RWPE1 (cell line): ENCODE measurements at regions of chr20 and their contacts with region 1.

Region 1: DNA sequence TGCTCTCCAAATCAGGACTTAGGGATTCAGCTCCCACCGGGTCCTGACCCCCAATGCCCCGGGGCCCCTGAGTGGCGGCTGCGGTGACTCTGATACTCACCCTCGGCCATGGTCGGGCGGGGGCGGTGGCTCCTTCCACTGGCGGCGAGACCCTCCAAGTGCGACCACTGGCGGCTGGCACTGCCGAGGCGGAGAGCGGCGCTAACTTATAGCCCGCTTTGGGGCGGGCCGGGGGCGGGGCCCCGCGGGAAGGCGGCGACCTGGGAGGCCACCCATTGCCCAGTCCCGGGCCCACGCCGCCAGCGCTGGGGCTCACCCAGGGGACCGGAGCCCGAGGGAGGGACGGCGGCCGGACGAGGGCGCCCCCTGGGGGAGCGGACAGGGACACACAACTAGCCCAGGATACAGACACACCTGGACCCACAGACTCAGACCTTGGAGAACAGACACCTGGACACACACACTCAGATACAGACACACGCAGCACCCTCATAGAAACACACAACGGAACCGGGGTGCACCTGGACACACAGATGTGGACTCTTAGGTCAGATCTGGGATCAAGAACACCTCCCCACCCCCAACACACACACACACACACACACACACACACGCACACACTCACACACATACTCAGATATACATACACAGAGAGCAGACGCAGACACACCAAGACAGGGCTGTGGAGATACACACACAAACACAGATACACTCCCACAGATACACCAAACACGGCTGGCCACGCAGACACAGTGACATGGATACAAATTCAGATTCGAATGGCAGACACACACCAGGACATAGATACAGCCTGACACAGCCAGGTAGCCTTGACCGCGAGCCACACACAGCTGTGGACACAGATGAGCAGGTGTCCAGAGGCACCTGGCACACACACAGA is at the start of gene TGM2:
- DNase-seq: peak; percentile 71
- H3K27ac ChIP-seq: peak within 1 kb of the TSS; percentile 86; the same call in 1 of the 2 replicates
- CTCF ChIP-seq: peak; percentile 89

Region 2: GRCh38 chr20:38057351-38057972 is 107.9 kb before region 1 on chr20:
- CTCF ChIA-PET with region 1: interaction called, 12 read pairs
- POLR2A ChIA-PET with region 1: no interaction called
- DNase-seq: peak; percentile 92
- H3K27ac ChIP-seq: no peak overlapping the region
- CTCF ChIP-seq: peak; percentile 97

Region 3: DNA sequence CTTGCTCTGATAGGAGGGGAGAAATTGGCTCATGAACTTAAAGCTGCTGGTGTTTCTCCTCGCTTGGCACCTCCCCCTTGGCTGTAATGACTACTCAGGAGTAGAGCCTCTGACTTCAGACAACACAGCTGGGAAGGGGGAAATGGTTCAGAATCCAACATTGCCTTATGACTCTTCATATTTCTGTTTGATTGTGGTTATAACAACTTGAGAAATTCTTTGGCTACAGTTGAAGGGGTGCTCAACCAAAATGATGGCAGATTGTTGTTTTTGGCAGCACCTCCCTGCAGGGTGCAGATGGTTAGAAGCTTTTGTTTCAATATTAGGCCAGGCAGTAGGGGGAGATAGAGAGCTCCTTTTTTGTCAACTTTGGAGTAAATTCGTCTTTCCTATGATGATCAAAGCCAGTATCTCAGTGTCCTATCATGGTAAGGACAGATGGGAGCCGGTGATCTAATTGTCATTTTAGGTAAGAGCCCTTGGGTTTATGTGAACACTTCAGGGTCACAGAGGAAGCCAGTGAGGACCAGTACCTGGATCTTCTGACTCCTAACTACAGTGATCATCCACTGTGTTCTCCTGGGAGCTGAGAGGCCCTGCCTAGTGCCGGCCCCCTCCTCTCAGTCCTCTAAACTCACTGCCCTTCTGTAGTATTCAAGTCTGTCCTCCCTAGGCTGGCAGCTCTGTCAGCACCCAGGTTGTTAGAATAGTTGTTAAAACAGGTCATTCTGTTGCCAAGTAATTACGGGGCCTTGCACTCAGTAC is 91.8 kb before region 1 on chr20:
- CTCF ChIA-PET with region 1: interaction called, 11 read pairs
- POLR2A ChIA-PET with region 1: no interaction called
- DNase-seq: peak; percentile 80
- H3K27ac ChIP-seq: no peak overlapping the region; the same call in 1 of the 2 replicates
- CTCF ChIP-seq: peak; percentile 89

Region 4: GRCh38 chr20:38152621-38153231 is 12.6 kb before region 1 on chr20:
- CTCF ChIA-PET with region 1: interaction called, 11 read pairs
- POLR2A ChIA-PET with region 1: no interaction called
- DNase-seq: peak; percentile 81
- H3K27ac ChIP-seq: peak overlapping the region; percentile 76
- CTCF ChIP-seq: no peak

Region 5: DNA sequence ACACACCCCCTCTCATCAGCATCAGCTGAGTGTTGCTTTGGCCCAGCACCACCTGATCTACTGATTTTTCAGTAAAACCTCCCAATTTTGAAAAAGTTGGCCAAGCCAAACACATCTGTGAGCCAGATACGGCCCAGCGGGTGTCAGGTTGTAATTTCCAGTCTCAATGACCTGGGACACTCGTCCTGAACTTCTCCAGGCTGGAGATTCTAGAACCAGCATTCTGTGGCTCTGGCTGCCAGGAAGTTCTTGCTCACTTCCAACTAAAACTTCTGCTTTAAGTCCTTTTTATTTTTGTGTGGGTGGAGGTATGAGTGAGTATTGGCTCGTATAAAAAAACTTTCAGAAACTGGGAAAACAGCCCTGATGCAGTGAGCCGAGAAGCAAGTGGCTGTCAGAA is 90.1 kb after region 1 on chr20:
- CTCF ChIA-PET with region 1: no interaction called
- POLR2A ChIA-PET with region 1: no interaction called
- DNase-seq: no peak
- H3K27ac ChIP-seq: no peak overlapping the region
- CTCF ChIP-seq: no peak

Region 6: DNA sequence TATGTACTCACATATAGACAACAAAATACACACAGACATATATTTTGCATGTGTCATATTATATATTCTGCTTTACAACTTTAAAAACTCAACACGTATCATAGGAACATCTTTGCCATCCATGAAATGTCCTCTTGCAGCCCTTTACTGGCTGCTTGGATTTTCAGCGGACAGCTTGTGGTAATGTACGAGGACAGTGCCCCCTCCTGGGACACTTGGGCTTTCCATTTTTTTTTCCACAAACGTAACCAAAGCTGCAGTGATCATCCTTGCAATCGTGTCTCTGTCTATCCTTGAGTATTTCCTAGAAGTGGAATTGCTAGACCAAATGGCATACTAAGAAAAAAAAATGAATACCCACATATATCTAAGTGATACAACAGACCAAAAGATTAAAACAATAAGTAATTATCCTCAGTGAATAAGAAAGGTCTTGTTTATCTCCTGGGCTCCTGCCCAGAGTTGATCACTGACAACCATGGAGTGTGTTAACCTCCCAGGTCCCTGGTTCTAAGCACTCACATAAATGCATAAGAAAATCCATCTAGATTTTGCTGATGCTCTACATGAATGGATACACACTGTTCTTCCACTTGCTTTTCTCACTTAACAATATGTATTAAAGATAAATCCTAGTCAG is 156.7 kb after region 1 on chr20:
- CTCF ChIA-PET with region 1: interaction called, 10 read pairs
- POLR2A ChIA-PET with region 1: no interaction called
- DNase-seq: peak; percentile 82
- H3K27ac ChIP-seq: no peak overlapping the region
- CTCF ChIP-seq: peak; percentile 81